Mammary epithelial cell (primary cell): ENCODE measurements at regions of chr18 and their contacts with region 1.

Region 1: DNA sequence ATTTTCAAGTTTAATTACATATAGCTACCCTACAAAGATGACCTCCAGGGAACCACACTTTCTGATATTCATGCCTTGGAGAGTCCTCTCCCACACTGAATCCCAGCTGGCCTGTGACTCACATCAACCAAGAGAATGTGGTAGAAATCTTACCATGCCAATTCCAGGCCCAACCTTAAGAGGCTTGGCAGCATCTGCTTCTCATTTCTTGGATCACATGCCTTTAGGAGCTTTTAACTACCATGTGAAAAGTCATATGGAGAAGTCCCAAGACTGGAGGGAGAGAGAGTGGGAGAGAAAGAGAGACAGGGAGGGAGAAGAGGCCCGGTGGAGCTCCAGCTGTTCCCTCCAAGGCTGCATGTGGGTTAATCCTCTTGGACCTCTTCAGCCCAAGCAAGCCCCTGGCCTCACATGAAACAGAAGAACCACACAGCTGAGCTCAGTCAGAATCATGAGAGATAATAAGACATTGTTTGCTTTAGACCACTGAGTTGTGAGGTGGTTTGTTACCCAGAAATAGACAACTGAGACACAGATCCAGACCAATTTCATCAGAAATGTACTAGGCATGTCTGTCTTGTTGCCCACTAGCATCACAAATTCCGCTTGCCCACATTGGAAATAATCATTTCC is 190.7 kb downstream of the MTCL1 start:
- DNase-seq: peak; percentile 74
- H3K4me3 ChIP-seq: no peak overlapping the region
- H3K27ac ChIP-seq: no peak overlapping the region
- H3K4me1 ChIP-seq: peaks cover 10% of the 10 kb centered on the region
- H3K27me3 ChIP-seq: no peaks in the 10 kb centered on the region
- CTCF ChIP-seq: no peak

Region 2: DNA sequence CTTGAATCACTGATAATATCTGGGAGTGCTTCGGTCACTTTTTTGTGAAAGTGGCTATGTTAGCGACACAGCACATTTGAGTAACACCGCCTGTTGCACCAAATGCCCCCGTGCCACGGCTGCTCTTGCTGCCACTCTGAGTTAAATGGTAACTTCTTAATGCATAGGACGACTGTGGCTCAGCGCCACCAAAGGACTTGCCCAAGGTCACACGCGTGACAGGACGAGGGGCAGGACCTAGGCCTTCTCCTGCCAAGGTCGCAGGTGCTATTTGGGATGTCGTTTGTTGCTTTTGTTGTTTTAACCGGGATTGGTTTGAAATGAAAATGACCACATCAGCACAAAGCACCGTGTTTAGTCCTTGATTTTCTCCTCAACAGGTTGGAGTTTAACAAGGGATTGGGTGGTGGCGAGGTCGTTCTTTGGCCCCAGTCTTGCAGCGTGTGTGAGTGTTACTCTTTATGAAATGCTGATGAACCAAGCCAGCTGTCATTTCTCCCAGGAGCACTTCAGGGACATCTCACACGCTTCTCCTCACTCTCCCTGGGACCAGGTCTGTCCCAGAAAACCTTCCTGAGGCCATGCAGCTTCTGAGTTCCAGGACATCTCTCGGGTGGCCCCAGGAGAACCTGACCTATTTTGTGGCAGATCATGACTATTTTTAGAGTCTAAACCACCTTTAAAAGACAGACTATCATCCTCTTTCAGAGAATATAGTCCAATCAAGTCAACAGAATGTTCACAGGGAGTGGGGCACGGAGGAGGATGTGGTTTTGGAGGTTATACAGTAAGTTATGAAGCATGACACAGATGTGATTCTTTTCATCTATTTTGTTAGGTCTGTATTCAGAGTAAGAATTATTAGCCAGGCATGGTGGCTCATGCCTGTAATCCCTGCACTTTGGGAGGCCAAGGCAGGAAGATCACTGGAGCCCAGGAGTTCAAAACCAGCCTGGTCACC is 140.8 kb before region 1 on chr18:
- CTCF ChIA-PET with region 1: no interaction called
- dilution Hi-C with region 1: no loop called
- in situ Hi-C with region 1: no loop called
- intact Hi-C with region 1: no loop called
- DNase-seq: peak; percentile 65
- H3K4me3 ChIP-seq: no peak overlapping the region
- H3K27ac ChIP-seq: peak overlapping the region; percentile 15
- H3K4me1 ChIP-seq: peaks cover 30% of the 10 kb centered on the region
- H3K27me3 ChIP-seq: no peaks in the 10 kb centered on the region
- CTCF ChIP-seq: no peak

Region 3: DNA sequence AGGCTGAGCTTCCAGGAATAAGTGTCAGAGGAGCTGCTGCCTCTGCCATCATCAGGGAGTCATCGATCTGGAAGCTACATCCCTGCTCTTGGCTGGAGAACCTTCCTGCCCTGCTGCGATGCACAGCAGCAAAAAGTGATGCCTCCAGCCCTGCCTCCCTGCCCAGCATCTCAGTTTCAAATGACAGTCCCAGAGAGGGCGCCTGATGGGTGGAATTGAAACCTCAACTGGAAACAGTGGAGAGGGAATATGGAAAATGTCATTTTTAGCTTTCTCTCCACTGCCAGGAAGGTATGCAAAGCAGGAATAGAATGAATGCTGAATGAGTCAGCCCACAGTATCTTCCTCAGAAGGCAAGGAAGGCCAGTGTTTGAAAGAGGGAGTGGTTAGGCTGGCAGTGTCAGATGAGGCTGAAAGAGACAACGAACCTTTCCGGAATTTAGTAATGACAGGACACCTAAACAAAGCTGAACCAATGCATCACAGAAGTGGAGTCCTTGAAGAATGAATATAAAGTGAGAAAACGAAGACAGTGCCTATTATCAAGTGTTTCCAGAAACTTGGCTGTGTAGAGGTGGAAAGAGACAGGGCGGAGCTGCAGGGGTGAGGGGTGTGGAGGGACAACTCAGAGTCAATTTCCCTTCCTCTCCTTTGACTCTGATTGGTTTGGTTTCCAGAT is 52.5 kb after region 1 on chr18:
- CTCF ChIA-PET with region 1: no interaction called
- dilution Hi-C with region 1: loop called (anchors 5 kb)
- in situ Hi-C with region 1: no loop called
- intact Hi-C with region 1: loop called (anchors 2 kb)
- DNase-seq: peak; percentile 88
- H3K4me3 ChIP-seq: peak overlapping the region; percentile 5 to 30 (median 25)
- H3K27ac ChIP-seq: peak overlapping the region; percentile 65
- H3K4me1 ChIP-seq: peaks cover 58% of the 10 kb centered on the region
- H3K27me3 ChIP-seq: no peaks in the 10 kb centered on the region
- CTCF ChIP-seq: no peak